MCF 10A (cell line): ENCODE measurements at regions of chr18 and their contacts with region 1.

Region 1: DNA sequence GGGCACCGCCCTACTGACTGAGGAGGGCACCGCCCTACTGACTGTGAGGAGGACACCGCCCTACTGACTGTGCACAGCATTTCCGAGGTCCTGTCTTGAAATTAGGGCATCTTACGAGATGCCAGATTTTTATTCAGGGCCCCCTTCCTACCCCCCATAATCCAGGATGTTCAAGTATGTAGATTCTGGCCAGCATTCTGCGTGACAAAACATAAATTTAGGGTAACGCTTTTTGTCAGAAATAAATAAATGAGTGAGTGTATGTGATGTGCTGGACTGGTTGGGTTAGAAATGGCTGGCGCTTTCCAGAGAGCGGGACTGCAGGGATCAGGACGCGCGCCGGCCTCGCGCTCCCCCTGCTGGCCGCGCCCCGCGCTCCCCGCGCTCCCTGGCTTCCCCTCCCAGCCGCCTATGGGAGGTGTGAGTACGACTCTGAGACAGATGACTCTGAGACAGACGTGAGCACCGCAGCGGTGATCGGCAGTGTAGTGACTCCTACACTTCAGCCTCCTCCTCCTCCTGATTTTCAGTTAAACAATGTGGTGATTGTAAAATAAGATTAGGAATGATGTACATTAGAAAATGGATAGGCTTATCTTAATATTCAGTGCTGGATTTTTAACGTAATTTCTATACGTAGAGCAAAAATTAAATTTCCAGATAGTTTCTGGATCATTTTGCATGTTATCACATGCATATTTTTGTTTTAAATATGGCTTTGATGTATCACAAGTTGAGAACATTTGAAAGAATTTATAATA is 149.2 kb upstream of the NFATC1 start:
- DNase-seq: peak; percentile 90
- H3K4me3 Mint-ChIP-seq: peak overlapping the region; percentile 70
- H3K27ac Mint-ChIP-seq: peak overlapping the region; percentile 90
- H3K4me1 Mint-ChIP-seq: peaks cover 9% of the 10 kb centered on the region
- H3K27me3 Mint-ChIP-seq: no peaks in the 10 kb centered on the region
- CTCF ChIP-seq: peak; percentile 96

Region 2: DNA sequence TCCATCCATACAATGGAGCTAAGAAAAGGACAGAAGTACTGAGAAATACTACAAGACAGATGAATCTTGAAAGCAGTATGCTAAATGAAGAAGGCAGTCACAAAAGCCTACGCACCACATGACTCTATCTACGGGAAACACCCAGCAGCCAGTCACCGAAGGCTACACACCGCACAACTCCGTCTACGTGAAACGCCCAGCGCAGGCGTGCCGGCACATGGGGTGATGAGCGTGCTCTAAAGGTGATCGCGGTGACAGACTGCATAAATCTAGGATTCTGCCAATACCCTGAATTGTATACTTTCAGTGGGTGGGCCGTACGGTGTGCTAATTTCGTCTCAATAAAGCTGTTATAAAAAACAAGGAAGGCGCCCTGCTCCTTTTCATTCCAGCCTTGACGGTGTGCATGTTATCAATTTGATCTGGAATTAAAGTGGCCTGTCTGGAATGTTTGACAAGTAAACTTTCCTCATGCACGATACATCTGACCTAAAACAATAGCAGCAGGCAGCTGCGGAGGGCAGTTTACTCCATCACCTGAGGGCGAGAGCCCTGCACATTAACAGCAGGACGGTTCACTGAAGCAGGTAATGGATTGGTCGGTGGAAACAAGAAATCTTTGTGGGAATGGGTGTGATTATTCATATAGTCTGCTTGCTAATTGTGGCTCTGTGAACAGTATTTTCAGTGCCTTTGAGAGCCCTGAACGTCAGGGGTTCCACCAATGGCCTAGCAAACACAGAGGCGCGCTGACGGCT is 353.1 kb before region 1 on chr18:
- CTCF ChIA-PET with region 1: no interaction called
- POLR2A ChIA-PET with region 1: no interaction called
- intact Hi-C with region 1: no loop called
- DNase-seq: no peak
- H3K4me3 Mint-ChIP-seq: no peak overlapping the region
- H3K27ac Mint-ChIP-seq: no peak overlapping the region
- H3K4me1 Mint-ChIP-seq: no peaks in the 10 kb centered on the region
- H3K27me3 Mint-ChIP-seq: no peaks in the 10 kb centered on the region
- CTCF ChIP-seq: no peak

Region 3: DNA sequence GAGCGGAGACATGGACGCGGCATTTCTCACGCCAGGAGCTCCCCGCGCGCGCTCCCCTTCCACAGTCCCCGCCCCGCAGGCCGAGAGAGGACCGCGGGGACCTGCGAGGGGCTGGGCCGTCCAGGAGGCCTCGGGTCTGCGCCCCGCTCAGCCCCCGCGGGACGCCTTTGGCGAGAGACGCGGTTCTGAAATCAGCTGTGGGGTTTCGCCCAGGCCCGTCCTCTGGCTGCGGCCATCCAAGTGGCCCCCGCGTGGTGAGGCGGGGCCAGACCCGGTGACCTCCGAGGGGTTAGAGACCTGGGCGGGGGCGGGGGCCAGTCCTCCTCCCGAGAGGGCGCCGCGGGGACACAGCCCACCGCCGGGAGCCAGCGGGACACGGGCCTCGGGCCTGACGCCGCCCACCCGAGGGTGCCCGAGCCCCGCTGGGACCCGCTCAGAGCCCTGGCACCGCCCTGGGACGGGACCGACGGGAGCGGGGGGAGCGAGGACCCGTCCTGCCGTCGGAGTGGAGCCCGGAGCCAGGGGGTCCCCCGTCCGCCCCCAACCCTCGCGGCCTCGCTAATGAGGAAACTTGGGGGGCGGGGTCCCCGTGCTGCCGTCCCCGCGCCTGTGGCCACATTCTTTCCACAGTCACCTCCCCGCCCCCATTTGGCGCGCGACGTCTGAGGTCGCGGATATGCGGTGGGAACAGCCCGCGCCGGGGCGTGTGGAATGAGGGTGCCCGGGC is 273.0 kb before region 1 on chr18:
- CTCF ChIA-PET with region 1: no interaction called
- POLR2A ChIA-PET with region 1: no interaction called
- intact Hi-C with region 1: no loop called
- DNase-seq: no peak
- H3K4me3 Mint-ChIP-seq: no peak overlapping the region
- H3K27ac Mint-ChIP-seq: no peak overlapping the region
- H3K4me1 Mint-ChIP-seq: no peaks in the 10 kb centered on the region
- H3K27me3 Mint-ChIP-seq: no peaks in the 10 kb centered on the region
- CTCF ChIP-seq: no peak

Region 4: GRCh38 chr18:79068937-79069791 is 177.4 kb before region 1 on chr18 and contains the start of gene ATP9B:
- CTCF ChIA-PET with region 1: no interaction called
- POLR2A ChIA-PET with region 1: no interaction called
- intact Hi-C with region 1: loop called (anchors 1 kb)
- DNase-seq: peak; percentile 94
- H3K4me3 Mint-ChIP-seq: peak within 1 kb of the TSS; percentile 72
- H3K27ac Mint-ChIP-seq: peak within 1 kb of the TSS; percentile 37
- H3K4me1 Mint-ChIP-seq: no peaks in the 10 kb centered on the region
- H3K27me3 Mint-ChIP-seq: no peaks in the 10 kb centered on the region
- CTCF ChIP-seq: no peak
- total RNA-seq, gene ATP9B: 25.5 and 34.4 TPM in 2 replicates

Region 5: GRCh38 chr18:79200546-79201268 is 45.8 kb before region 1 on chr18:
- CTCF ChIA-PET with region 1: interaction called, 4 read pairs
- POLR2A ChIA-PET with region 1: no interaction called
- intact Hi-C with region 1: loop called (anchors 5 kb)
- DNase-seq: peak; percentile 2
- H3K4me3 Mint-ChIP-seq: no peak overlapping the region
- H3K27ac Mint-ChIP-seq: no peak overlapping the region
- H3K4me1 Mint-ChIP-seq: peaks cover 8% of the 10 kb centered on the region
- H3K27me3 Mint-ChIP-seq: no peaks in the 10 kb centered on the region
- CTCF ChIP-seq: no peak

Region 6: DNA sequence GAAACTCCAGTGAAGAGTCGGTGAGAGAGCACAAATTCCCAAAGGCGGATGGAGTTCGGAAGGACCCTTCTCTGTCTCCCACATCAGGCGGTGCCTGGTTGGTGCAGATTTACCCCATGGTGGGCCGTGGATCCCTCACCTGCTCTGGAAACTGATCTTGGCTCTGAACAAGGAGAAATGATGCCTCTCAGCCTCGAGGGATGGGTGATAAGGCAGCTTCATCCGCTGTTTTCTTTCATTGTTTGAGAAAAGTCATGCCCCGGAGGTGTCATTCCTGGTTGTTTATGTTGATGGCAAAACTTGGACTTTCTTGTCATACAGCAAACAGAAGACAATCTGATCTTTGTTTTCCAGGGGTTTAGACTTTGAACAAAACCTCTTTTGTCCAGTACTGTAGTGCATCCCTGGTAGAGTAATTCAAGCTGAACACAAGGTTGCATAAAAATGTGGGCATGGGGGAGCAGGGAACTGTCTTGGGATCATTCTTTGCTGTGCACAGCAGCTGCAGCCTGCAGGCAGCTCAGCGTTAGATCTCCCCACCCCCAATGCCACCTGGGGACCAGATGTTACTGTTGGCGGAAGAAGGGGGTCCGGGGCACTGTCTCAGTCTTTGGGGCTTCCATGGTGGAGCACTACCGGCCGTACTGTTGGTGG is 230.5 kb after region 1 on chr18:
- CTCF ChIA-PET with region 1: no interaction called
- POLR2A ChIA-PET with region 1: no interaction called
- intact Hi-C with region 1: no loop called
- DNase-seq: no peak
- H3K4me3 Mint-ChIP-seq: no peak overlapping the region
- H3K27ac Mint-ChIP-seq: no peak overlapping the region
- H3K4me1 Mint-ChIP-seq: no peaks in the 10 kb centered on the region
- H3K27me3 Mint-ChIP-seq: no peaks in the 10 kb centered on the region
- CTCF ChIP-seq: no peak

Region 7: DNA sequence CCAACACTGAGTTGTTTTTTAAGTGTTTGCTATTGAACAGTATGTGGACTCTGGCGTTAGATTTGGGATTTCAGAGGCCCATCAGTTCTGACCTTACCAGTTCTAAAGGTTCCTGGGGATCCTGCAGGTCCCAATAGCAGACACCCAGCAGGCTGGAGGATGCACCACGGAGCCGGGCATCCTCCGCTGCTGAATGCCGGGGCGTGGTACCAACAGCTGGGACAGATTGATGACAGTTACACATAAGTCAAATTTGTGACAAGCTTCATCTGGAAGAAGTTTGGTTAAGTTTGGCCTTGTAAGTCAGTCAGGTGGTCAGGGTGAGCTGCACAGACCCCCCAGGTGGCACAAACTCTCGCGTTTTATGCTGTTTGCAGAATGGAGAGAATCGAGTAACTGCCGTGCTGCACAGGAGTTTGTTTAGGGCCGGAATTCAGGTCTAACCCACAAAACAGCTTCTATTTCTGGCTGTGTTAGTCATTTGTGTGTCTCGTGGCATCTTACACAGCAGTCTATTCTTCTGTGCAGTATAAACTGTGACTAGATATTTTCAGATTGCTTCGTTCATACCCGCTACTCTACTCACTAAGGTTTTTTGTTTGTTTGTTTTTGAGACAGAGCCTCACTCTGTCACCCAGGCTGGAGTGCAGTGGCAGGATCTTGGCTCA is 452.3 kb after region 1 on chr18:
- CTCF ChIA-PET with region 1: no interaction called
- POLR2A ChIA-PET with region 1: no interaction called
- intact Hi-C with region 1: no loop called
- DNase-seq: no peak
- H3K4me3 Mint-ChIP-seq: no peak overlapping the region
- H3K27ac Mint-ChIP-seq: no peak overlapping the region
- H3K4me1 Mint-ChIP-seq: no peaks in the 10 kb centered on the region
- H3K27me3 Mint-ChIP-seq: no peaks in the 10 kb centered on the region
- CTCF ChIP-seq: no peak